HEK293T (cell line): ENCODE measurements at regions of chr12 and their contacts with region 1.

Region 1: GRCh38 chr12:98516184-98516873 is 939 bp downstream of the TMPO start:
- DNase-seq: peak; percentile 41

Region 2: GRCh38 chr12:98456576-98457573 is 59.5 kb before region 1 on chr12:
- CTCF ChIA-PET with region 1: no interaction called
- POLR2A ChIA-PET with region 1: no interaction called
- DNase-seq: peak; percentile 21

Region 3: GRCh38 chr12:98490501-98491453 is 25.6 kb before region 1 on chr12:
- CTCF ChIA-PET with region 1: interaction called, 5 read pairs
- POLR2A ChIA-PET with region 1: interaction called, 45 read pairs
- DNase-seq: peak; percentile 77

Region 4: DNA sequence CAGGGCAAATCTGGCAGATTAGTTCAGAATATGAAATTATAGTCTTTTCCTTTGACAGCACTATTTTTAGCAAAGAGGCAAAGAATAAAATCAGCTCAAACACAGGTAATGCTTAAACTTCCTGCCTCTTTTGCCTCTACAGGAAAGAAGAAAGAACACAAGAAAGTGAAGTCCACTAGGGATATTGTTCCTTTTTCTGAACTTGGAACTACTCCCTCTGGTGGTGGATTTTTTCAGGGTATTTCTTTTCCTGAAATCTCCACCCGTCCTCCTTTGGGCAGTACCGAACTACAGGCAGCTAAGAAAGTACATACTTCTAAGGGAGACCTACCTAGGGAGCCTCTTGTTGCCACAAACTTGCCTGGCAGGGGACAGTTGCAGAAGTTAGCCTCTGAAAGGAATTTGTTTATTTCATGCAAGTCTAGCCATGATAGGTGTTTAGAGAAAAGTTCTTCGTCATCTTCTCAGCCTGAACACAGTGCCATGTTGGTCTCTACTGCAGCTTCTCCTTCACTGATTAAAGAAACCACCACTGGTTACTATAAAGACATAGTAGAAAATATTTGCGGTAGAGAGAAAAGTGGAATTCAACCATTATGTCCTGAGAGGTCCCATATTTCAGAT is 16.5 kb after region 1 on chr12:
- CTCF ChIA-PET with region 1: interaction called, 13 read pairs
- POLR2A ChIA-PET with region 1: no interaction called
- DNase-seq: peak; percentile 52